HEK293 (cell line): ENCODE measurements at regions of chr17 and their contacts with region 1.

Region 1: GRCh38 chr17:61486135-61487120 is 34.2 kb downstream of the TBX4 start:
- H3K4me3 ChIP-seq: no peak overlapping the region
- H3K27ac ChIP-seq: peak overlapping the region; percentile 80
- H3K4me1 ChIP-seq: peaks cover 14% of the 10 kb centered on the region
- CTCF ChIP-seq: 0 out of 2 replicates have a peak, but pooled peaks have one; percentile 12

Region 2: GRCh38 chr17:61467416-61468259 is 18.8 kb before region 1 on chr17:
- CTCF ChIA-PET with region 1: interaction called, 5 read pairs
- POLR2A ChIA-PET with region 1: interaction called, 12 read pairs
- H3K4me3 ChIP-seq: no peak overlapping the region
- H3K27ac ChIP-seq: no peak overlapping the region
- H3K4me1 ChIP-seq: peaks cover 6% of the 10 kb centered on the region
- CTCF ChIP-seq: no peak